ENCODE measurements at regions of chr1 and their contacts with region 1.

Region 1: DNA sequence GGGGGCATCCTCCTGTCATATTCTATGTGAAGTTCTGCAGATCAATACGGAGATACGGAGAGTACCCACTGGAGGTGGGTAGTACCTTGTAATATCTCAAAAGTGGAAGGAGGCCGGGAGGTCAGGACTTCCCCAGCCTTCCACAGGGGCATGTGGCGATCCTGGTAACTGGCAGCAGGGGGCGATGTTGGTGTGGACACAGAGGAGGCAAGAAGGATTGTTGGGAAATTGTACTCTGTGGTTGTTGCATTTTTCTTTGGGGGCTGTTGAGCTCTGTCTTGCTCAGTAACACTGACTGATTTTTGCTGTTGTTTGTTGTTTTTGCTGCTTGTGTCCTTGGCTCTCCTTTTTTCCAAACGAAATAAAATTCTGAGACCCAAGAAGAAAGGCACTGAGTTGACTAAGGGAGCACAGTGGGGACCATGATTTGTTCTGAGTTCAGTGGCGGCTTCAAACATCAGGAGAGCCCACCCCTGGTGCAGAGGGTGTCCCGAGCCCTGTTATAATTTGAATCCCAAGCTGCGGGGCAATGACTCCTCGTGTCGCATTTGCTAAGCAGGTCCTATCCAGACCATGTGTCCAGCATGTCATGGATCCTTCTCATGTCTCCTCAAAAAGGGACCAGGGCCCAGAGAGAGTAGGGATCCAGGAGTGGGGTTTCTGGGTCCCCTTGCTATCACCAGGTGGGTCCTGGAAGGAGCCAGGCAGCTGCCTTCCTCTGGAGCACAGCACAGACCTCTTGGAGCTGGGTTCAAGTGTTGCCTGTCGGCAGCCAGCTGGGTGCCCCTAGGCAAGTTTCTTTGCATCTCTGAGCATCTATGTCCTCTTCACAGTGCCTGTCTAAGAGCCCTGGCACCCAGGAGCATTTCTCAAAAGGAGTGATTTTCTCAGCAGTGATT is 22.8 kb downstream of the LHX4 start:
- DNase-seq: peak; percentile 33
- ATAC-seq: peak; percentile 40
- H3K4me3 Mint-ChIP-seq: no peak overlapping the region
- H3K27ac Mint-ChIP-seq: no peak overlapping the region
- H3K4me1 Mint-ChIP-seq: no peaks in the 10 kb centered on the region
- H3K27me3 Mint-ChIP-seq: peaks cover 47% of the 10 kb centered on the region
- CTCF ChIP-seq: no peak

Region 2: DNA sequence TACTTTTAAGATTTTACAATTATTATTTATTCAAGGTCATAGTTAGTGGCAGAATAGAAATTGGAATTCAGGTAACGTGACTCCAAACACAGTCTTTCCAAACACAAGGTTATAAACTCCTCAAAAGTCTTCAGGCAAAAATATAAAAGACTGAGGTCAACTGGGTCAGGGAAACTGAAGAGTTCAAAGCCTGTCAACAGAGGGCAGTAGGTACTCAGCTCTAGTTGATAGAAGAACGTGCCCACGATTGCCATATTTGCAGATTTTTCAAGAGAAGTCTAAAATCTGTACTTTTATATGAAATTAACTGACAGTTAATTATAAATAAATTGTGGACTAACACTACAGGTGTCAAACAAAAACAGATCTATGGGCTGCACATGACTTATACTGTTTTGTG is 112.2 kb after region 1 on chr1:
- CTCF ChIA-PET with region 1: no interaction called
- POLR2A ChIA-PET with region 1: no interaction called
- intact Hi-C with region 1: no loop called
- DNase-seq: no peak
- ATAC-seq: no peak
- H3K4me3 Mint-ChIP-seq: no peak overlapping the region
- H3K27ac Mint-ChIP-seq: no peak overlapping the region
- H3K4me1 Mint-ChIP-seq: no peaks in the 10 kb centered on the region
- H3K27me3 Mint-ChIP-seq: no peaks in the 10 kb centered on the region
- CTCF ChIP-seq: no peak

Region 3: GRCh38 chr1:180415985-180416633 is 163.2 kb after region 1 on chr1:
- CTCF ChIA-PET with region 1: interaction called, 3 read pairs
- POLR2A ChIA-PET with region 1: no interaction called
- intact Hi-C with region 1: loop called (anchors 2 kb)
- DNase-seq: no peak
- ATAC-seq: no peak
- H3K4me3 Mint-ChIP-seq: no peak overlapping the region
- H3K27ac Mint-ChIP-seq: no peak overlapping the region
- H3K4me1 Mint-ChIP-seq: no peaks in the 10 kb centered on the region
- H3K27me3 Mint-ChIP-seq: no peaks in the 10 kb centered on the region
- CTCF ChIP-seq: no peak

Measured in activated B cell treated with CpG ODN at 0.5 μM for 24 hours (primary cell).